GM18951 (cell line): ENCODE measurements at regions of chr18 and their contacts with region 1.

Region 1: GRCh38 chr18:76351961-76352581 is 143.0 kb downstream of the ZNF516 start:
- POLR2A ChIP-seq: no peak

Region 2: DNA sequence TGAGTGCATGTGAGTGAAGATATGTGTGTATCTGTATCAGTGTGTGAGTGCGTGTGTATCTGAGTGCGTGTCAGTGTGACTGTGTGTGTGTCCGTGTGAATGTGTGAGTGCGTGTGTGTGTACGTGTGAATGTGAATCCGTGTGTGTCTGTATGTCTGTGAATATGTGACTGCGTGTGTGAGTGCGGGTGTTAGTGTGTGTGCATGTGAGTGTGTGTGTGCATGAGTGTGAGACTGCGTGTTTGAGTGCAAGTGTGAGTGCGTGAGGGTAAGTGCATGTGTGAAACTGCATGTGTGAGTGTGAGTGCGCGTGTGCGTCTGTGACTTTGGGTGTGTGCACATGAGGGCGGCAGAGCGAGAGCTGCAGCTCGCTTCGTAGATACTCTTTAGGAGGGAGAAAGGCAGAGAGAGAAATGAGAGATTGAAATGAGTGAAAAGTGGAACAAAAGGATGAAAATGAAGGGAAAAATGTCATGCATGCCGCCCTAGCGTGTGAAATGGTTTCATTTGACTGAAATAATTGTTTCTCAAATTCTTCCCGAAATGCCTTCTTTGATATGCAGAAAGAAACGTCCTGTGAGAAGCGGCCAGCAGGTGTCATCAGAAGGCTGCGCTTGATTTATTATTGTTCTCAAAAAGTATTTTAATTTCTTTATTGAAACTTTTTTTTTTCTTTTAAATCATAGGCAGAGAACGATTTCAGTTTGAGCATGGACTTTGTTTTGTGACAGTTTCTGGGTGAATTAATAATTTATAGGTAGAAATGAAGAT is 1728.8 kb before region 1 on chr18:
- in situ Hi-C with region 1: loop called (anchors 25 kb)
- POLR2A ChIP-seq: no peak

Region 3: GRCh38 chr18:76131738-76132137 is 220.3 kb before region 1 on chr18:
- in situ Hi-C with region 1: no loop called
- POLR2A ChIP-seq: no peak